ENCODE measurements at regions of chr2 and their contacts with region 1.

Region 1: DNA sequence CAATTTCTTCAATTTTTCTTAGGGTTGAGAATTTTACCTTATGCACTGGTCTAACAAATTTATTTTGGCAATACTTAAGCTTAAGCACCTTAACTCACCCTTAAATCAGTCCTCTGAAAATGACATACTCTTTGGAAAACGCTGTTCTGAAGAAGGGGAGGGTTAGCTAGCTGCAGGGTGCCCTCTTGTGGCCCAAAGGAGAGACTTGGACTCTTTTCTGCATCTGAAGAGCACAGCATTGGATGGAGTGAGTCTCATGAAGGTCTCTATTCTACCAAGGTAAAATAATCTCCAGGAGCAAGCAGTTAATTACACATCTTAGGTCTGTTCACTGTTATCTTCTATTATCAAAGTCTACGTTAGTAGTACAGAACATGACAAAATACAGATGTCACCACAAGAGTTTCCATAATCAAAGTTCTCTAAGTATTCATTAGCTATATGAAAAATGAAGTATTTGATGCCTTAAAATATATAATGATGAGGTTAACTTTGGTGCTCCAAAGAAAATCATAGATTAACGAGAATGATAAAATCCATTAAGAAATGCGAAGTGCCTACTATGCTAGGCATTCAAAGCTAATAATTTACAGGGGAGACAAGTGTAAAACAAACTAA is 24.4 kb downstream of the PUM2 start:
- DNase-seq: peak; percentile 14 to 76 (median 43)
- ATAC-seq: peak; percentile 90
- H3K4me3 ChIP-seq: no peak overlapping the region
- H3K4me3 Mint-ChIP-seq: no peak overlapping the region
- H3K27ac ChIP-seq: no peak overlapping the region
- H3K27ac Mint-ChIP-seq: peak overlapping the region; percentile 19
- H3K4me1 ChIP-seq: peaks cover 10% of the 10 kb centered on the region
- H3K4me1 Mint-ChIP-seq: peaks cover 72% of the 10 kb centered on the region
- H3K27me3 ChIP-seq: no peaks in the 10 kb centered on the region
- H3K27me3 Mint-ChIP-seq: no peaks in the 10 kb centered on the region
- CTCF ChIP-seq: peak; percentile 77

Region 2: DNA sequence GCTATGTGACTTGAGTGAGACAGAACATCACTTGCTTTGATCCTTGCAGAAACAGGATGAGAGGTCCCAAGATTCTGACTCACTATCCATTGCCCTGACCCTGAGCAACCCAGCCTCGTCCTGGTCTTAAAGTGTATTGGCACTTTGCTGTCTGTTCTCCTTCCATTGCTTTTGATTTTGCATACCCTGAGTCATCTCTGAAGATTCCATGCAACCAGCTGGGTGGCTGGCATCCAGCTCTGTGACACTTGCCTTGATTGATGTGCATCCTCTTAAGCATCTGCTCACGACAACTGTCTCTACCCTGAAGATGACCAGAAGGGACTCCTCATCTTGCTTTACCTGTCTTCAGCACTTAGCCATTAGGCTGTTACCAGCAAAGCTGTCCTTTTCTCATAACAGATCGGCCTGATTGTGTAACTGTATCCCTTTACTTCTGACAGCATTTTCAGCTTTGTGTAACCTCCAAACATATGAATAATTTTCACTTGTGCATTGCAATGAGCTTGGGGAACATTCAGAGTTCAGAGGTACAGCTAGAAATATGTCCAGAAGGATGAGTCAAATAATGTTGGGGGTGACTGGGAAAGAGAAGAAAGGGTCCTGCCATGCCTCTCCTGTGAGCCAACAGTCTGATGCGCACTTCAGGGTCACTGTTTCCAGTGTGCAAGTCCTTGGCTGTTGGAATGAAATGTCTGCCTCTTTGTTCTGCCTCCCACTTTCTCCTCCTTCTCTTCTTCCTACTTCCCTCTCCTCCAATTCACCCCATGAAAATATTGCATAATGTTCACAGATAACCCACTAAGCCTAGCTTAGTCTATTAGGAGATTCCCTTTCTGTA is 718.1 kb before region 1 on chr2:
- CTCF ChIA-PET with region 1: no interaction called
- POLR2A ChIA-PET with region 1: no interaction called
- intact Hi-C with region 1: no loop called
- DNase-seq: no peak
- ATAC-seq: no peak
- H3K4me3 ChIP-seq: no peak overlapping the region
- H3K4me3 Mint-ChIP-seq: no peak overlapping the region
- H3K27ac ChIP-seq: no peak overlapping the region
- H3K27ac Mint-ChIP-seq: no peak overlapping the region
- H3K4me1 ChIP-seq: no peaks in the 10 kb centered on the region
- H3K4me1 Mint-ChIP-seq: no peaks in the 10 kb centered on the region
- H3K27me3 ChIP-seq: no peaks in the 10 kb centered on the region
- H3K27me3 Mint-ChIP-seq: peaks cover 19% of the 10 kb centered on the region
- CTCF ChIP-seq: no peak

Region 3: GRCh38 chr2:20001361-20001863 is 324.9 kb before region 1 on chr2:
- CTCF ChIA-PET with region 1: no interaction called
- POLR2A ChIA-PET with region 1: no interaction called
- intact Hi-C with region 1: no loop called
- DNase-seq: no peak
- ATAC-seq: no peak
- H3K4me3 ChIP-seq: no peak overlapping the region
- H3K4me3 Mint-ChIP-seq: no peak overlapping the region
- H3K27ac ChIP-seq: no peak overlapping the region
- H3K27ac Mint-ChIP-seq: no peak overlapping the region
- H3K4me1 ChIP-seq: no peaks in the 10 kb centered on the region
- H3K4me1 Mint-ChIP-seq: no peaks in the 10 kb centered on the region
- H3K27me3 ChIP-seq: no peaks in the 10 kb centered on the region
- H3K27me3 Mint-ChIP-seq: peaks cover 56% of the 10 kb centered on the region
- CTCF ChIP-seq: no peak

Region 4: DNA sequence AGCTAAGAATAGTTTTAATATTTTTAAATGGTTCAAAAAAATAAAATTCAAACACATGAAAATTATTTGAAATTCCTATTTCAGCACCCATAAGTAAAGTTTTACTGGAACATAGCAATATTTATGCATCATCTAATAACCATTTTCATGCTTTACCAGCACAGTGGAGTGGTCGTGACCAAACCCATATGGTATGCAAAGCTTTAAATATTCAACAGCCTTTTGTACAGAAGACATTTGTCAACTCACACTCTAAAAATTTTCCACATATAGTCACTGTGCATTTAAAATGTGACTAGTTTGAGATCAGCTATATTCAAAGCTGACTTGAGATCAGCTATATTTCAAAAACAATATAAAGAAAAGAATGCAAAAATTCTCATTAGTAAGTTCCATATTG is 21.9 kb before region 1 on chr2:
- CTCF ChIA-PET with region 1: interaction called, 11 read pairs
- POLR2A ChIA-PET with region 1: interaction called, 3 read pairs
- intact Hi-C with region 1: no loop called
- DNase-seq: no peak
- ATAC-seq: no peak
- H3K4me3 ChIP-seq: no peak overlapping the region
- H3K4me3 Mint-ChIP-seq: no peak overlapping the region
- H3K27ac ChIP-seq: no peak overlapping the region
- H3K27ac Mint-ChIP-seq: peak overlapping the region; percentile 14
- H3K4me1 ChIP-seq: no peaks in the 10 kb centered on the region
- H3K4me1 Mint-ChIP-seq: peaks cover 16% of the 10 kb centered on the region
- H3K27me3 ChIP-seq: no peaks in the 10 kb centered on the region
- H3K27me3 Mint-ChIP-seq: no peaks in the 10 kb centered on the region
- CTCF ChIP-seq: no peak

Region 5: GRCh38 chr2:20313659-20314058 is 12.6 kb before region 1 on chr2:
- CTCF ChIA-PET with region 1: interaction called, 20 read pairs
- POLR2A ChIA-PET with region 1: interaction called, 3 read pairs
- intact Hi-C with region 1: no loop called
- DNase-seq: no peak
- ATAC-seq: no peak
- H3K4me3 ChIP-seq: no peak overlapping the region
- H3K4me3 Mint-ChIP-seq: no peak overlapping the region
- H3K27ac ChIP-seq: no peak overlapping the region
- H3K27ac Mint-ChIP-seq: peak overlapping the region; percentile 35
- H3K4me1 ChIP-seq: peaks cover 12% of the 10 kb centered on the region
- H3K4me1 Mint-ChIP-seq: peaks cover 45% of the 10 kb centered on the region
- H3K27me3 ChIP-seq: no peaks in the 10 kb centered on the region
- H3K27me3 Mint-ChIP-seq: no peaks in the 10 kb centered on the region
- CTCF ChIP-seq: no peak

Region 6: GRCh38 chr2:20343128-20343527 is 16.9 kb after region 1 on chr2:
- CTCF ChIA-PET with region 1: interaction called, 31 read pairs
- POLR2A ChIA-PET with region 1: interaction called, 6 read pairs
- intact Hi-C with region 1: no loop called
- DNase-seq: peak in 2 of 14 experiments; percentile 23 to 31
- ATAC-seq: no peak
- H3K4me3 ChIP-seq: no peak overlapping the region
- H3K4me3 Mint-ChIP-seq: peak overlapping the region; percentile 26
- H3K27ac ChIP-seq: no peak overlapping the region
- H3K27ac Mint-ChIP-seq: peak overlapping the region; percentile 43
- H3K4me1 ChIP-seq: peaks cover 50% of the 10 kb centered on the region
- H3K4me1 Mint-ChIP-seq: peaks cover 90% of the 10 kb centered on the region
- H3K27me3 ChIP-seq: no peaks in the 10 kb centered on the region
- H3K27me3 Mint-ChIP-seq: no peaks in the 10 kb centered on the region
- CTCF ChIP-seq: no peak